ENCODE measurements at regions of chr12 and their contacts with region 1.

Region 1: DNA sequence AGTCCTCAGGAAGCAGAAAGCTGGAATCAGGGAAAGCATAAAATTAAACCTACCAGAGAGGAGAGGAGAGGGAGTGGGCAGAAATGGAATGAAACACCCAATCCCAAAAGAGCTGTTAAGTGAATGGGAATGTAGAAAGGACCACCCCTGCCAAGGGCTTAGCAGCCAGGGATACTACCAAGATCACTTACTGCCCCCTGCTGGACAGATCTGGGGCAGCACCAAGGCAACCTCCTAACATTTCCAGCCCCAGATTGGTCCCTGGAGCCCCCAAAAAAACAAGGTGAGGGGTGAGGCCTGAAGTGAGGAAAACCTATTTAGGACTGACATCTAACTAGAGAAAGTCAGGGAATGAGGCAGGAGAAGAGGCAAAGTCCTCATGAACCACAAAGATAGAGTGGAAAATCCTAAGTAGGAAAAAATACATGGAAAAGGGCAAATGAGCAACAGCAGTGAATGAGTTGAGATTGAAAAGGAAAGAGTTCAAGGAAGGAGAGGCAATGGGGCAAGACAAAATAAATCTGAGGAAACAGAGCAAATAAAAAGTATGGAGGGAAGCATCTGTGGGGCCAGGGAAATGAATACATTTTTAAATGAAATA is 11.2 kb upstream of the FKBP11 start:
- DNase-seq: peak; percentile 63 to 97
- H3K4me3 ChIP-seq: no peak overlapping the region
- H3K27ac ChIP-seq: no peak overlapping the region
- H3K4me1 ChIP-seq: no peaks in the 10 kb centered on the region
- H3K27me3 ChIP-seq: no peaks in the 10 kb centered on the region
- CTCF ChIP-seq: peak; percentile 84 to 97 (median 93)
- EP300 ChIP-seq: no peak
- POLR2A ChIP-seq: no peak
- RAD21 ChIP-seq: peak; percentile 67 to 72

Region 2: DNA sequence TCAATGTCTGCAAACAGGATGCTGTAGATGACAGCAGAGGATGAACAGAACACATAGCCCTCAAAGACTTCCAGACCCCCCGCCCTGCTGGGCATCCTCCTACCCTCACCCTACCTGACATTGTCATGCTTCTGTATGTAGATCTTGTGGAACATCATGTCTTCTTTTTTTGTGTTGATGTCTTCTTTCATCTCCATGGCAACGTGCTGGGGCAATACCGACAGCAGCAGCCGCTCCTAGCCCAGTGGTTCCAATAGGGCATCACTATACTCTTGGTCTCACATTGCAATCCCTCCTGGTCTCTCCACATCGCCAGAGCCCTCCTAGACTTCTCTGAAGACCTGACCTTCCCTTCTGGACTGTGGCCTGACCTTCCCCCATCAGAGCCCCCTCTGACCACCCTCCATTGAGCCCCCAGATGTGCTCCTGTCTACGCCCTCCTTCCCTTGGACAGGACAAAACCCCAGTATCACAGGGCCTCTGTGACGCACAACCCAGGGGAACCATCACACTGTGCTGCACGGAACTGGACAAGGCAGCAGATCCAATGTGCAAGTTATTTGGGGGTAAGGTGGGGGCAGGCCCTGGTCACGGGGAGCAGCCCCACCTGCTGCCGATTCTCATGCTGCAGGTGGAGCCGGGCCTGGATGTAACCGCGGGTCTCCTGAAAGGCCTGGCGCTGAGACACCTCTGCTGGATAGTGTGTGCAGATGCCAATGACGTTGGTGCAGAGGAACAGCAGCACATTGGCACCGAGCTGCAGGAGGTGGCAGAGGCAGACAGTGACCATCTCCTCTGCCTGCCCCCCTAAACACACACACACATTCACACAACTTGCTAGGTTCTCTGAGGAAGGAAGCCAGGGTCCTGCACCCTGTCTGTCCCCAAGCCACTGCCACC is 158.7 kb before region 1 on chr12:
- CTCF ChIA-PET with region 1: no interaction called
- POLR2A ChIA-PET with region 1: no interaction called
- DNase-seq: no peak
- H3K4me3 ChIP-seq: no peak overlapping the region
- H3K27ac ChIP-seq: 0 out of 2 replicates have a peak overlapping the region, but pooled peaks have one; percentile 31
- H3K4me1 ChIP-seq: peaks cover 0 to 14% (median 11%) of the 10 kb centered on the region in 4 experiments; a peak in 6 of 7 replicates
- H3K27me3 ChIP-seq: no peaks in the 10 kb centered on the region
- CTCF ChIP-seq: no peak
- EP300 ChIP-seq: no peak; a peak in 1 of 3 replicates
- POLR2A ChIP-seq: no peak
- RAD21 ChIP-seq: no peak

Region 3: GRCh38 chr12:48903982-48904411 is 32.5 kb before region 1 on chr12:
- CTCF ChIA-PET with region 1: interaction called, 34 read pairs
- POLR2A ChIA-PET with region 1: interaction called, 3 read pairs
- DNase-seq: peak in 1 of 2 experiments; percentile 95
- H3K4me3 ChIP-seq: peak overlapping the region; percentile 13 to 59 (median 53); a peak in 7 of 8 replicates
- H3K27ac ChIP-seq: no peak overlapping the region
- H3K4me1 ChIP-seq: 0 out of 7 replicates have a peak, but pooled peaks cover 0 to 2% (median 0%) of the 10 kb centered on the region in 4 experiments
- H3K27me3 ChIP-seq: no peaks in the 10 kb centered on the region
- CTCF ChIP-seq: peak; percentile 75 to 77 (median 76)
- EP300 ChIP-seq: no peak
- POLR2A ChIP-seq: no peak
- RAD21 ChIP-seq: peak in 1 of 2 experiments; percentile 35; a peak in 2 of 4 replicates

Region 4: GRCh38 chr12:48924617-48925303 is 11.7 kb before region 1 on chr12:
- CTCF ChIA-PET with region 1: interaction called, 140 read pairs
- POLR2A ChIA-PET with region 1: interaction called, 49 read pairs
- DNase-seq: peak; percentile 29 to 79
- H3K4me3 ChIP-seq: peak overlapping the region; percentile 61 to 86 (median 70)
- H3K27ac ChIP-seq: peak overlapping the region; percentile 55
- H3K4me1 ChIP-seq: peaks cover 0 to 14% (median 4%) of the 10 kb centered on the region in 4 experiments; a peak in 4 of 7 replicates
- H3K27me3 ChIP-seq: no peaks in the 10 kb centered on the region; a peak in 1 of 7 replicates
- CTCF ChIP-seq: peak; percentile 64 to 71 (median 69)
- EP300 ChIP-seq: no peak
- POLR2A ChIP-seq: peak; percentile 27 to 44; a peak in 2 of 3 replicates
- RAD21 ChIP-seq: peak; percentile 46 to 61

Region 5: GRCh38 chr12:48969833-48970701 is 33.6 kb after region 1 on chr12:
- CTCF ChIA-PET with region 1: interaction called, 19 read pairs
- POLR2A ChIA-PET with region 1: no interaction called
- DNase-seq: peak in 1 of 2 experiments; percentile 69
- H3K4me3 ChIP-seq: peak overlapping the region; percentile 11 to 56 (median 32); a peak in 7 of 8 replicates
- H3K27ac ChIP-seq: no peak overlapping the region
- H3K4me1 ChIP-seq: peaks cover 28 to 49% (median 42%) of the 10 kb centered on the region in 4 experiments
- H3K27me3 ChIP-seq: peaks cover 48 to 81% (median 79%) of the 10 kb centered on the region in 4 experiments
- CTCF ChIP-seq: peak in 1 of 3 experiments; percentile 8; a peak in 1 of 4 replicates
- EP300 ChIP-seq: no peak
- POLR2A ChIP-seq: no peak
- RAD21 ChIP-seq: no peak

Region 6: GRCh38 chr12:48977315-48978281 is 41.1 kb after region 1 on chr12:
- CTCF ChIA-PET with region 1: interaction called, 30 read pairs
- POLR2A ChIA-PET with region 1: no interaction called
- DNase-seq: peak in 1 of 2 experiments; percentile 88
- H3K4me3 ChIP-seq: peak overlapping the region in 3 of 4 experiments; percentile 16 to 57 (median 26); a peak in 4 of 8 replicates
- H3K27ac ChIP-seq: no peak overlapping the region
- H3K4me1 ChIP-seq: peaks cover 0 to 39% (median 30%) of the 10 kb centered on the region in 4 experiments; a peak in 6 of 7 replicates
- H3K27me3 ChIP-seq: peaks cover 78 to 99% (median 96%) of the 10 kb centered on the region in 4 experiments
- CTCF ChIP-seq: peak in 2 of 3 experiments; percentile 63 to 99; a peak in 3 of 4 replicates
- EP300 ChIP-seq: no peak
- POLR2A ChIP-seq: no peak
- RAD21 ChIP-seq: peak; percentile 18 to 36; a peak in 3 of 4 replicates

Region 7: GRCh38 chr12:48988030-48988649 is 51.7 kb after region 1 on chr12:
- CTCF ChIA-PET with region 1: interaction called, 13 read pairs
- POLR2A ChIA-PET with region 1: no interaction called
- DNase-seq: peak in 1 of 2 experiments; percentile 98
- H3K4me3 ChIP-seq: no peak overlapping the region
- H3K27ac ChIP-seq: no peak overlapping the region
- H3K4me1 ChIP-seq: peaks cover 0 to 4% (median 0%) of the 10 kb centered on the region in 4 experiments; a peak in 2 of 7 replicates
- H3K27me3 ChIP-seq: peaks cover 18 to 55% (median 44%) of the 10 kb centered on the region in 4 experiments
- CTCF ChIP-seq: peak in 2 of 3 experiments; percentile 86 to 98; a peak in 3 of 4 replicates
- EP300 ChIP-seq: no peak
- POLR2A ChIP-seq: no peak
- RAD21 ChIP-seq: peak; percentile 56 to 65

Region 8: GRCh38 chr12:48995061-48995879 is 58.8 kb after region 1 on chr12:
- CTCF ChIA-PET with region 1: interaction called, 13 read pairs
- POLR2A ChIA-PET with region 1: no interaction called
- DNase-seq: peak in 1 of 2 experiments; percentile 92
- H3K4me3 ChIP-seq: peak overlapping the region in 1 of 4 experiments; percentile 40; a peak in 2 of 8 replicates
- H3K27ac ChIP-seq: no peak overlapping the region
- H3K4me1 ChIP-seq: peaks cover 9 to 29% (median 16%) of the 10 kb centered on the region in 4 experiments
- H3K27me3 ChIP-seq: peaks cover 50 to 74% (median 70%) of the 10 kb centered on the region in 4 experiments
- CTCF ChIP-seq: peak; percentile 74 to 91 (median 76)
- EP300 ChIP-seq: peak in 1 of 2 experiments; percentile 47; a peak in 1 of 3 replicates
- POLR2A ChIP-seq: no peak
- RAD21 ChIP-seq: peak; percentile 80 to 83

Region 9: GRCh38 chr12:49121047-49121696 is 184.7 kb after region 1 on chr12:
- CTCF ChIA-PET with region 1: no interaction called
- POLR2A ChIA-PET with region 1: no interaction called
- DNase-seq: peak; percentile 13 to 56
- H3K4me3 ChIP-seq: no peak overlapping the region
- H3K27ac ChIP-seq: no peak overlapping the region
- H3K4me1 ChIP-seq: no peaks in the 10 kb centered on the region
- H3K27me3 ChIP-seq: no peaks in the 10 kb centered on the region
- CTCF ChIP-seq: peak; percentile 48 to 82 (median 80)
- EP300 ChIP-seq: no peak
- POLR2A ChIP-seq: no peak
- RAD21 ChIP-seq: peak; percentile 75 to 80